ENCODE measurements at regions of chr12 and their contacts with region 1.

Region 1: GRCh38 chr12:62267480-62267879 is 7.3 kb downstream of the USP15 start:
- DNase-seq: no peak
- ATAC-seq: peak; percentile 41
- H3K4me3 ChIP-seq: peak overlapping the region; percentile 12; the same call in 1 of the 2 replicates
- H3K27ac ChIP-seq: peak overlapping the region; percentile 4; the same call in 1 of the 2 replicates
- H3K4me1 ChIP-seq: peaks cover 27% of the 10 kb centered on the region
- H3K27me3 ChIP-seq: no peaks in the 10 kb centered on the region
- CTCF ChIP-seq: no peak
- EP300 ChIP-seq: no peak
- POLR2A ChIP-seq: no peak
- RAD21 ChIP-seq: no peak

Region 2: DNA sequence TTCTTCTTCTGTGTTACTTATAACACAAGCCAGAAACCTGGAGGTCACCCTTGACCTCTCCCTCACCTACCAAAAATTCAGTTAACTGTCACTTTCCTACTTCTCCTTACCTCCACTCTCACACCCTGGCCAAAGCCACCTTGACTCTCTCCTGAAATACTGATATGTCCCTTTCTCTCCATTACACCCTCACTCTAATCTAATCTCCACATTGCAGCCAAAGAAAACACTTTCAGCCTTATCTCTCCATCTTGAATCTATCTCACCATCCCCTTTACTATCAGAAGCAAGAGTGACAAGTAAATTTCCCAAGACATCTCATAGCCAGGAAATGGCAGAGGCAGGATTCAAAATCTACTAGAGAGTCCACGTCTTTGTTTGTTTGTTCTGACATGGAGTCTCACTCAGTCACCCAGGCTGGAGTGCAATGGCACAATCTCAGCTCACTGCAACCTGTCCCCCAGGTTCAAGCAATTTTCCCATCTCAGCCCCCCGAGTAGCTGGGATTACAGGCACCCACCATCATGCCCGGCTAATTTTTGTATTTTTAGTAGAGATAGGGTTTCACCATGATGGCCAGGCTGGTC is 35.2 kb before region 1 on chr12:
- CTCF ChIA-PET with region 1: no interaction called
- POLR2A ChIA-PET with region 1: no interaction called
- RAD21 ChIA-PET with region 1: no interaction called
- SMC1A ChIA-PET with region 1: no interaction called
- in situ Hi-C with region 1: no loop called
- intact Hi-C with region 1: no loop called
- DNase-seq: no peak
- ATAC-seq: no peak
- H3K4me3 ChIP-seq: no peak overlapping the region
- H3K27ac ChIP-seq: no peak overlapping the region
- H3K4me1 ChIP-seq: no peaks in the 10 kb centered on the region
- H3K27me3 ChIP-seq: no peaks in the 10 kb centered on the region
- CTCF ChIP-seq: no peak
- EP300 ChIP-seq: no peak
- POLR2A ChIP-seq: no peak
- RAD21 ChIP-seq: no peak

Region 3: DNA sequence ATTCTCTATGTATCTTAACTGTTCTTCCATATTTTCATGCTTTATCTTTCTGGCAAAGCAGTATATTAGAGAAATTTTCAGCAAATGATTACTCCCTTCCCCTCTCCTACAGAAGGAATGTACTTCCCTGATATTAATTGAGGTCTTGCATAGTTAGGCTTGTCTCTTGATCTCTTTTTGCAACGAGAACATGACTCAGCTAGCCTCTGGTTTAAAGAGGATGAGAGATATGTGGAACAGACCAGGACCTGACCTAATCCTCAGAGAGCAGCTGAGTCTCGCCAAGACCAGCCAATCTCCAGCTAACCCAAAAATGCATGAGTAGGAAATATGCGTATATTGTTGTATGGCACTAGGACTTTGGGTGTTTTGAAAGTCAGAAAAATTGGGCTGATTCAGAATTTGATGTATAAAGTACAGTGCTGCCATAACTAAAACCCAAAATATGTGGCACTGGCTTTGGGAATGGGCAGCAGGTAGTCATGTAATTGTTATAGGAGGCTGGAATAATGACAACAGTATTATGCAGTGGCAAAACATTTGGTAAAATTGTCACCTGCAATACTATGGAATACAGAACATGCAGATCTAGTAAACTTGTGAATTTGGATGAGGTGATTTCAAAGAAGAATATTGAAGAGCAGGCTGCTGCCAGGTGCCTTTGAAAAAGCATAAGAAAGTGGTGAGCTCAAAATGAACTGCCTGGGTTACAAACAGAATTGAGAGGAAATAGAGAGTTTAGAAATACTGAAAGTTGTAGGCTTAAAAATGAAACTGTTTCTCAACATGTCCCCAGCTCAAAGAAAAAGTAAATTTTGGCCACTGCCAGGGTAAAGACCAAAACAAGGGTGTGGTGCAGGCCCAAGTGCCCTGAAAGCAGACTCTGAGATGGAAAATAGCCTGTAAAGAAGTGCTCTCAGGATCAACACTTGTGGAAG is 16.5 kb before region 1 on chr12:
- CTCF ChIA-PET with region 1: no interaction called
- POLR2A ChIA-PET with region 1: interaction called, 3 read pairs
- RAD21 ChIA-PET with region 1: interaction called, 4 read pairs
- SMC1A ChIA-PET with region 1: interaction called, 15 read pairs
- in situ Hi-C with region 1: no loop called
- intact Hi-C with region 1: no loop called
- DNase-seq: peak; percentile 39
- ATAC-seq: peak; percentile 96
- H3K4me3 ChIP-seq: no peak overlapping the region
- H3K27ac ChIP-seq: peak overlapping the region; percentile 60
- H3K4me1 ChIP-seq: peaks cover 18% of the 10 kb centered on the region
- H3K27me3 ChIP-seq: no peaks in the 10 kb centered on the region
- CTCF ChIP-seq: no peak
- EP300 ChIP-seq: no peak
- POLR2A ChIP-seq: no peak
- RAD21 ChIP-seq: no peak

Region 4: GRCh38 chr12:62282057-62282774 is 14.7 kb after region 1 on chr12:
- CTCF ChIA-PET with region 1: interaction called, 4 read pairs
- POLR2A ChIA-PET with region 1: interaction called, 4 read pairs
- RAD21 ChIA-PET with region 1: interaction called, 21 read pairs
- SMC1A ChIA-PET with region 1: interaction called, 8 read pairs
- in situ Hi-C with region 1: no loop called
- intact Hi-C with region 1: no loop called
- DNase-seq: no peak
- ATAC-seq: peak; percentile 51
- H3K4me3 ChIP-seq: no peak overlapping the region
- H3K27ac ChIP-seq: no peak overlapping the region
- H3K4me1 ChIP-seq: peaks cover 3% of the 10 kb centered on the region; the same call in 1 of the 2 replicates
- H3K27me3 ChIP-seq: no peaks in the 10 kb centered on the region
- CTCF ChIP-seq: no peak
- EP300 ChIP-seq: no peak
- POLR2A ChIP-seq: no peak
- RAD21 ChIP-seq: no peak

Region 5: DNA sequence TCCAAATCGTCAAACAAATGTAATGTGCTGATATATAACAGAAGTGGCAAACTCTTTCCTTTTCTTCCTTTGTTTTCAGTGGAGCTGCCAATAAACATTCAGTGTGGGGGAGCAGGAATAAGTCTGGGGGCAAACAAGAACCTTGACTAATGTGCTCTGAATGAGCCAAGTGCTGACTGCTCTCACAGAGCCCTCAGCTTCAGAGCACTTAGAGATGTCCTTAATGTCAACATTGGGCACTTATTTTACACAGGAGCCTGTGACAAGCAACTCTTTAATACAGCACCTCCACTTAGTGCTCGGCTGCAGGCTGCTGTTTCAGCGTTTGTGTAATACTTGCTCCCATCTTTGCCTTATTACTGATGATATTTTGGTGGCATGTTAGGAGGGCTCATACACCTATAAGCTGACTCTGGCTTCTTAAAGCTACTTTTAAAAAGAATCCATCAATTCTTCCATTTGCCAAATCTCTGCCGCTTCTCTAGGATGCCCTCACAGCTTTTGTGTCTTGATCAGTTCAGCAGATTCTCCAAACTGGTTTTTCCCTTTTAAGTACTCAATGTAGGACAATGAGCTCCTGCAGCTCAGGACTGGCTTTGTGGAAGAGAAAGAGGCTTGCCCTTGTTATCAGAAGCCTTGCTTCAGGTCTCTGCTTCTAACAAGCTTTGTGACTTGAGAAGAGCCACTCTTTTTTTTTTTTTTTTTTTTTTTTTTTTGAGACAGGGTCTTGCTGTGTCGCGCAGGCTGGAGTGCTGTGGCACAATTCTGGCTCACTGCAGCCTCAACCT is 405.7 kb after region 1 on chr12:
- CTCF ChIA-PET with region 1: no interaction called
- POLR2A ChIA-PET with region 1: no interaction called
- RAD21 ChIA-PET with region 1: no interaction called
- SMC1A ChIA-PET with region 1: no interaction called
- in situ Hi-C with region 1: no loop called
- intact Hi-C with region 1: no loop called
- DNase-seq: no peak
- ATAC-seq: no peak
- H3K4me3 ChIP-seq: no peak overlapping the region
- H3K27ac ChIP-seq: no peak overlapping the region
- H3K4me1 ChIP-seq: no peaks in the 10 kb centered on the region
- H3K27me3 ChIP-seq: no peaks in the 10 kb centered on the region
- CTCF ChIP-seq: no peak
- EP300 ChIP-seq: no peak
- POLR2A ChIP-seq: no peak
- RAD21 ChIP-seq: no peak